ENCODE measurements at regions of chr14 and their contacts with region 1.

Region 1: GRCh38 chr14:24160850-24161804 is at the start of gene IRF9:
- DNase-seq: peak; percentile 99
- ATAC-seq: peak; percentile 87
- H3K4me3 Mint-ChIP-seq: peak within 1 kb of the TSS; percentile 93
- H3K27ac Mint-ChIP-seq: peak within 1 kb of the TSS; percentile 99
- H3K4me1 Mint-ChIP-seq: peaks cover 50% of the 10 kb centered on the region
- H3K27me3 Mint-ChIP-seq: no peaks in the 10 kb centered on the region
- total RNA-seq, gene IRF9: 238 to 295 TPM

Region 2: DNA sequence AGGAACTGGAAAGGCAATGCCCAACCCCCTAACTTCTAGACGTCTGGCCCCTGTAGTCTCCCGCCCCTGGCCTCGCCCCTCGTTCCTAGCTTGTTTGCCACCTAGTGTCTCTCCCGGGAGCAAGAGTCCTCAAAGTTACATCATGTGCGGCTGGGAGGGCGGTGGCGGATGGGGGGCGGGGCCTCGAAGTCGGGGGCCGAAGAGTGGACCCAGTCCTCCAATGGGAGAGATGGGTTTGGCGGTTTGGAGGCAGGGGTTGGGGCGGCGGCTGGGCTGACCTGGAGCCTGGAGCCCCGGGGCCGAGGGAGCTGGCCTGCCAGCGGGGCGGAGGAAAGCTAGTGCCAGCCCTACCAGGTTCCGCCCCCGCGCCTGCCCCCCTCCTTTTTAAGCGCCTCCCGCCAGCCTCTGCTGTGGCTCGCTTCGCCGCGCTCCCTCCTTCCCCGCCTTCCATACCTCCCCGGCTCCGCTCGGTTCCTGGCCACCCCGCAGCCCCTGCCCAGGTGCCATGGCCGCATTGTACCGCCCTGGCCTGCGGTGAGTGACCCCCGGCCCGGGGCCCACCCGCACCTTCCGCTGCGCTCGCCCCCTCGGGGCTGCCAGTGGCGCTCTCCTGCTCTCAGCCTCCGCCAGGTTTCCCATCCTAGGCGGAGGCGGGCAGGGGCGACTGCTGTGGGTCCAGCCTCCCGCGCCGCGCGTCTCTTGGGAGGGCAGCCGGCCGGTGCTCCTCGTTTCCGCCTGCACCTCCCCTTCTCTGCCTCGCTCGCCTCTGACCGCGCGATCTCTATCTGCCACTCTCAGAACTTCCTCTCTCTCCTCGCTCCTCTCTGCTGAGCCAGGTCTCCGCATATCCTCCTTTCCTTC is 67.0 kb before region 1 on chr14 and contains the start of gene PCK2:
- CTCF ChIA-PET with region 1: interaction called, 36 read pairs
- DNase-seq: peak; percentile 89
- ATAC-seq: peak; percentile 74
- H3K4me3 Mint-ChIP-seq: peak within 1 kb of the TSS; percentile 99
- H3K27ac Mint-ChIP-seq: peak within 1 kb of the TSS; percentile 99
- H3K4me1 Mint-ChIP-seq: peaks cover 33% of the 10 kb centered on the region
- H3K27me3 Mint-ChIP-seq: no peaks in the 10 kb centered on the region
- total RNA-seq, gene PCK2: 61.7 to 87.0 TPM

Region 3: GRCh38 chr14:24114536-24115450 is 46.3 kb before region 1 on chr14 and contains the starts of genes DCAF11 and NRL:
- CTCF ChIA-PET with region 1: interaction called, 40 read pairs
- DNase-seq: peak; percentile 100
- ATAC-seq: peak; percentile 91
- H3K4me3 Mint-ChIP-seq: peak within 1 kb of the TSS; percentile 99
- H3K27ac Mint-ChIP-seq: peak within 1 kb of the TSS; percentile 100
- H3K4me1 Mint-ChIP-seq: peaks cover 30% of the 10 kb centered on the region
- H3K27me3 Mint-ChIP-seq: no peaks in the 10 kb centered on the region
- total RNA-seq, gene DCAF11: 86.3 to 94.4 TPM
- total RNA-seq, gene NRL: 2.6 to 3.2 TPM

Region 4: DNA sequence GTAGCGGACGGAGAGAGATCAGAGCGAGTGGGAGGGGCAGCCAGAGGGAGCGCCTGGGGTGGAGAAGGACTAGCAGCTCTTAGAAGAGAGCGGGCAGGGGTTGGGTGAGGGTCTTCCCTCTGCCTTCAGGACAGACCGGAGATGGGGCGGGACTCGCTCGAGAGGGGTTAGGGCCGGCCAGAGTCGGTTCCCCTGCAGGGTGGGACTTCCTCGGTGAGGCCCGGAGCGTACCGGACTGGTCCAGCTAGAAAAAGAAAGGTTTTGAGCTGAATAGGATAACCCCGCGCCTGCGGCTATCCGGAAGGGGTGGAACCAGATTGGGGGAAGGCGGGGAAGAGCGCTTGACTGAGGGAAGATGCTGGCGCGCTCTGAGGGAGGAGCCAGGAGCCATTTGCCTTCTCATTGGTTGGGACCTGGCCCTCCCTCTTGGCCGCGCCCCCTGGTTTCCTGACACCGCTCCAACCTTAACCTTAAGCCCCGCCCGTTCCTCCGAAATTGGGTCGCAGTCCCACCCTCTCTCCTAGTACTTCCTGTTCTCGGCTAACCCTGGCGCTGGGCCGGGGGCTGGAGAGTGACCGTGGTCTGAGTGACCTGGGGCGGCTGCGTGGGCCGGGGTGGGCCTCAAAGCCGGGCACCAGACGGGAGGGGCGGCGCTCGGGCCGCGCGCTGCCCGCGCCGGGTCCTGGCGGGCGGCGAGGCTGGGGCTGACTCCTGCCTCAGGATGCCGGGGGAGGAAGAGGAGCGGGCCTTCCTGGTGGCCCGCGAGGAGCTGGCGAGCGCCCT is 14.0 kb before region 1 on chr14 and contains the start of gene RNF31:
- CTCF ChIA-PET with region 1: interaction called, 99 read pairs
- DNase-seq: peak; percentile 99
- ATAC-seq: peak; percentile 88
- H3K4me3 Mint-ChIP-seq: peak within 1 kb of the TSS; percentile 94
- H3K27ac Mint-ChIP-seq: peak within 1 kb of the TSS; percentile 99
- H3K4me1 Mint-ChIP-seq: peaks cover 67% of the 10 kb centered on the region
- H3K27me3 Mint-ChIP-seq: no peaks in the 10 kb centered on the region
- total RNA-seq, gene RNF31: 129 to 149 TPM

Region 5: DNA sequence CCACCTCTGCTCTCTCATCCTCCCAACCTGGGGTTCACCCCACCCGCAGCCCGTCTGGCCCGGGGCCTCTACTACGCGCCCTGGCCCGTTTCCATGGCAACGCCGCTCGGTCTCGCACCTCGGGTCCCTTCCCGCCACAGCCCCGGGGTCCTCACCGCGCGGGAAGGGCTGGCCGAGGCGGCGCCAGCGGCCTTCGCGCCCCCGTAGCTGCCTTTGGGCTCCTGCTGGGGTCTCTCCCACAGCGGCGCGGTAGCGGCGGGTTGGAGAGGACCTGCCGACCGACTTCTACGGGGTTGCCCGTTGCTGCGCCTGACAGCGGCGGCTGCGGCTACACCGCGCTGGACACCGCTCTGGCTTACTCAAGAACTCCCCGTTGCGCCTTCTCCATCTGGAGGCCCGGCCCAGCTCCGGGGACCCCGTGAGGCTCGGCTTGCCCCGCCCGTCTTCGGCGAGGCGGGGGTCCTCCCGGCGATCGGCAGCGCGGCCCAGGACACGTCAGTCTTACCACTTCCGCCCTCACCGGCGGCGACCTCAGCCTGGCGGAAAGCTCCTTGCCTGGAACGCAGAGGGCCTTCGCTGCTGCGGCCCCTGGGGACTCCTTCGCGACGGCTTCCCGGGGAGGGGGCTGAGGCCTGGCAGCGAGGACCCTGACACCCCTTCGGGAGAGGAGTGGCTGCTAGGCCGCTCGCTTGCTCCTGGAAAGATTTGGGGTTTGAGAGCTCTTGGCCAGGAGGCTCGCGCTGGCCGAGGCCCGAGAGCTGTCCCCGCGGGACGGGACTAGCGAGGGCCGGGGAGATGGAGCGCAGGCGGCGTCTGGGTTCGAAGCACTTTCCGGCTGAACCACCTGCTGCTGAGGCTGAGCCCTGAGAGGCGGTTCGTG is 34.3 kb after region 1 on chr14 and contains the start of gene TM9SF1:
- CTCF ChIA-PET with region 1: interaction called, 14 read pairs
- DNase-seq: peak; percentile 93
- ATAC-seq: peak; percentile 92
- H3K4me3 Mint-ChIP-seq: peak within 1 kb of the TSS; percentile 89
- H3K27ac Mint-ChIP-seq: peak within 1 kb of the TSS; percentile 95
- H3K4me1 Mint-ChIP-seq: peaks cover 56% of the 10 kb centered on the region
- H3K27me3 Mint-ChIP-seq: no peaks in the 10 kb centered on the region
- total RNA-seq, gene TM9SF1: 26.7 to 32.8 TPM

Region 6: GRCh38 chr14:24271134-24271833 is 110.2 kb after region 1 on chr14 and contains the start of gene RABGGTA:
- CTCF ChIA-PET with region 1: interaction called, 11 read pairs
- DNase-seq: peak; percentile 92
- ATAC-seq: peak; percentile 92
- H3K4me3 Mint-ChIP-seq: peak within 1 kb of the TSS; percentile 84
- H3K27ac Mint-ChIP-seq: peak within 1 kb of the TSS; percentile 93
- H3K4me1 Mint-ChIP-seq: peaks cover 41% of the 10 kb centered on the region
- H3K27me3 Mint-ChIP-seq: no peaks in the 10 kb centered on the region
- total RNA-seq, gene RABGGTA: 34.3 to 44.6 TPM

Measured in activated CD8-positive, alpha-beta memory T cell treated with anti-CD3 and anti-CD28 coated beads, Interleukin-2, amount 10 ng/mL, durations not matched to agents 7 days and 5 days (primary cell).